ENCODE measurements at regions of chr19 and their contacts with region 1.

Region 1: GRCh38 chr19:15332311-15332996 is at the start of gene BRD4:
- DNase-seq: peak; percentile 74 to 88 (median 84)
- ATAC-seq: peak; percentile 22 to 84 (median 80)
- H3K4me3 ChIP-seq: peak within 1 kb of the TSS; percentile 73 to 99 (median 96)
- H3K27ac ChIP-seq: peak within 1 kb of the TSS; percentile 84 to 97 (median 92)
- H3K4me1 ChIP-seq: peaks cover 6 to 67% (median 54%) of the 10 kb centered on the region in 12 donors
- H3K27me3 ChIP-seq: no peaks in the 10 kb centered on the region
- CTCF ChIP-seq: no peak
- POLR2A ChIP-seq: no peak
- total RNA-seq, gene BRD4: 31.4 to 78.9 (median 61.8) TPM

Region 2: GRCh38 chr19:15280915-15281683 is 51.4 kb before region 1 on chr19:
- intact Hi-C with region 1: loop called in 5 of 10 experiments (anchors 5 kb)
- DNase-seq: peak; percentile 81 to 92 (median 90)
- ATAC-seq: peak; percentile 82 to 92 (median 88)
- H3K4me3 ChIP-seq: peak overlapping the region in 2 of 12 donors; percentile 10 to 13
- H3K27ac ChIP-seq: peak overlapping the region in 11 of 12 donors; percentile 14 to 83 (median 58)
- H3K4me1 ChIP-seq: peaks cover 45 to 100% (median 96%) of the 10 kb centered on the region in 12 donors
- H3K27me3 ChIP-seq: no peaks in the 10 kb centered on the region
- CTCF ChIP-seq: peak in 8 of 12 donors; percentile 10 to 53 (median 22)
- POLR2A ChIP-seq: no peak

Region 3: DNA sequence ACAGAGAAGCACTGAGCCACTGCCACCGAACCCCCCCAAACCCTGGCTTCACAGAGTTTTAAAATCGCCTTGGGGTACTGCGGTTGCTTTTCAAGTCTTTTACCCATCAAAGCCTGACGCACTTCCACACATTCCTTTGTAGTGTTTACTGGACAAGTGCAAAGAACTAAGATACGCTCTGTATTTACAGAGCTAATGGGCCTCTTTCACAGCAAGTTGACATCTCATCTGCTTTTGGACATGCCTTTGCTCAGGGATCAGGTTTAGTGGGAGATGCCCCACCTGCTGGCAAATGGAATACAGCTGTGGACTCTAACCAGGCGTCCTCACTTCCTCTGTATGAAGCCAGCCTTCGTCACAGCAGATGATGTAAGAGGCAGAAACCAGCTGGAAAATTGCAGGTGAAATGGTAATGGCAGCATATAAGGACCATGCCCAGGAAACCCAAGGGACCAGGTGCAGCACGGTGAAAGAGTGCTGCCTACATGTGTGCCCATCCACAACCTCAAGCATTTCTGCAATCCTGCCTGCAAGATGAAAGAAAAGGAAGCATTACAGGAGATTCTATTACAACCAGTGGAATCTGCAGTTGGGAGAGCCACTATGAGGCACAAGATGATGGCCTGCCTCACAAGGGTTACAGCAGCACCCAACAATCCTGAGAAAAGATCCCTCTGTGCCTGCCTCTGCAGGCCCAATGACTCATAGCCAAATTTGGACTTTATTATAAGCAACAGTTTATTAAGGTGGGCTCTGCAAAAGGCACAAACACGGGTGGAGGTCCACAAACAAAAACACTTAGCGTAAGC is 34.8 kb before region 1 on chr19:
- intact Hi-C with region 1: loop called in 3 of 10 experiments (anchors 5 kb)
- DNase-seq: no peak
- ATAC-seq: no peak
- H3K4me3 ChIP-seq: no peak overlapping the region
- H3K27ac ChIP-seq: peak overlapping the region in 2 of 12 donors; percentile 6 to 75
- H3K4me1 ChIP-seq: peaks cover 37 to 99% (median 91%) of the 10 kb centered on the region in 12 donors
- H3K27me3 ChIP-seq: no peaks in the 10 kb centered on the region
- CTCF ChIP-seq: no peak
- POLR2A ChIP-seq: no peak

Region 4: DNA sequence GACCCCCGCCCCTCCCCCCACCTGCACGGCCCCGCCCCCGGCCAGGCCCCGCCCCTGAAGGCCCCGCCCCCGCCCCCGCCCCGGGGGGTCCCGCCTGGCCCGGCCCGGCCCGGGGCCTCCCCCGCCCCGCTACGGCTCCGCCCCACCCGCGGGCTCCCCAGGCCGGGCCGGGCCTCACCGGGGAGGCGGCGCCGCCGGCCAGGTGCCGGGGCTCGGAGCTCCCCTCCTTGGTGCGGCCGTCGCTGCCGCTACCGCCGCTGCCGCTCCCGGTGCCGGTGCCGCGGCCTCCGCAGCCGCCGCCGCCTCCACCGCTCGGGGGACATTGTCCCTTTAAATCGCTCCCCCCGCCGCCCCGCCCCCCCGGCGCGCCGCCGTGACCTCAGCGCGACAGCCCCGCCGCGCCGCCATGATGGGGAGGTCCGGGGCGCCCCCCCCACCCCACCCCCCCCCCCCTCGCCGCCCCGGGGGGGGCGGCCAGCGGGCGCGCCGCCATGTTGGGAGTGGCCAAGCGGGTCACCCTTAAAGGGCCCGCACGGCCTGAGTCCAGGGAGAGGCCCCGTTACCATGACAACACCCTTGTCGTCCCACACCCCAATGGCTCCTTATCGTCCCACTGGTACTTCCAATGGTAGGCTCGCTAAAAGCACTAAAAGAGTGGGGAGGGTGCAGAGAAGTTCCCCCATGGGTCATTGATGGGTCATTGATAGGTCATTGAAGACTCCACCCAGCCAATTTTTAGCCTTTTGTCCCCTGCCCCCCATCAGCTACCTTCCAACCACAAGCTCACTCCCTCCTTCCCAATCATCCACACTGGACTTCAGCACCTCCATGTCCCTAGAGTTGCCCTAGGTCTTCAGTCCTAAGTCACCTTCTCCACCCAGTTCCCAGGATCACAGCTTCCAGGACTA is 117.4 kb after region 1 on chr19 and contains the start of gene WIZ:
- intact Hi-C with region 1: loop called in 1 of 10 experiments (anchors 5 kb)
- DNase-seq: peak; percentile 88 to 94 (median 89)
- ATAC-seq: peak; percentile 5 to 41 (median 21)
- H3K4me3 ChIP-seq: peak within 1 kb of the TSS; percentile 65 to 95 (median 74)
- H3K27ac ChIP-seq: peak within 1 kb of the TSS; percentile 67 to 94 (median 86)
- H3K4me1 ChIP-seq: peaks cover 3 to 43% (median 20%) of the 10 kb centered on the region in 12 donors
- H3K27me3 ChIP-seq: peaks cover 0 to 9% (median 3%) of the 10 kb centered on the region in 9 donors
- CTCF ChIP-seq: no peak
- POLR2A ChIP-seq: peak in 1 of 2 donors; percentile 21
- total RNA-seq, gene WIZ: 23.1 to 52.4 (median 25.7) TPM